ENCODE measurements at regions of chr2 and their contacts with region 1.

Region 1: DNA sequence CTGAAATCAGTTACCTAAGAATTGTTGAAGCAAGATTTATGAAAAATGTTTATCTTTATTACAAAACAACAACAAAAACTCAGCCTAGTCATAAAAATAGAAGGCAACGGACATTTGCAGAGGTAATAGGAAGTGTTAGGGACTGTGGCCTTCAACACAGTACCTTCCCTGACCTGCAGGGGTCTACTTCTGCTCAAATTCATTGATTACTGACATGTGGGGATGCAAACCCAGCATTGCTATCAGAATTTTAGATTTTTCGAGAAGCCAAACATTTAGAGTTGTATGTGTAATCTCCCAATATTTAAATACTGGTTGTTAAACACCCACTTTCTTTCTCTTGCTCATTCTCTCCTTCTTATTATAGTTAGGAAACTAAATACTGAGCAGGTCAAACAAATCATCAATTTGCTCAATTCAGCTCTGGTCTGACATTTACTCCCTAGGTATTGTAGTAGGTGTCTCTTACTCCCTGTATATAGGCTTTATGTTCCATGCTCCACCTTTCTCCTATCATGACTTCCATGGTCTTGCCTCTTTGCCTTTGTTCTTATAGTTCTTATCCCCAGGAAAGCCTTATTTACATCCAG is 198.5 kb downstream of the UBE2E3 start:
- DNase-seq: peak; percentile 50
- ATAC-seq: peak; percentile 80
- H3K4me3 Mint-ChIP-seq: no peak overlapping the region
- H3K27ac Mint-ChIP-seq: peak overlapping the region; percentile 41
- H3K4me1 Mint-ChIP-seq: peaks cover 51% of the 10 kb centered on the region
- H3K27me3 Mint-ChIP-seq: no peaks in the 10 kb centered on the region

Region 2: GRCh38 chr2:181165199-181165868 is 13.6 kb before region 1 on chr2:
- CTCF ChIA-PET with region 1: interaction called, 11 read pairs
- POLR2A ChIA-PET with region 1: interaction called, 3 read pairs
- DNase-seq: peak; percentile 55
- ATAC-seq: peak; percentile 86
- H3K4me3 Mint-ChIP-seq: peak overlapping the region; percentile 27
- H3K27ac Mint-ChIP-seq: peak overlapping the region; percentile 93
- H3K4me1 Mint-ChIP-seq: peaks cover 47% of the 10 kb centered on the region
- H3K27me3 Mint-ChIP-seq: no peaks in the 10 kb centered on the region

Region 3: DNA sequence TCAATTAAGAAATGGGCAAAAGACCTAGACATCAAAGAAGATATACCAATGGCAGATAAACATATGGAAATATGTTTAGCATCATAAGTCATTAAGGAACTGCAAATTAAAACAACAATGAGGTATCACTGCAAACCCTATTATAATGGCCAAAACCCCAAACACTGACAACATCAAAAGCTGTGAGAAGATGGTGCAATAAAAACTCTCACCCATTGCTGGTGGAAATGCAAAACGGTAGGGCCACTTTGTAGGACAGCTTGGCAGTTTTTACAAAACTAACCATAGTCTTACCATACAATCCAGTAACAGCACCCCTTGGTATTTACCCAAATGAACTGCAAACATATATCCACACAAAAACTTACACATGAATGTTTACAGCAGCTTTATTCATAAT is 14.6 kb after region 1 on chr2:
- CTCF ChIA-PET with region 1: interaction called, 27 read pairs
- POLR2A ChIA-PET with region 1: no interaction called
- DNase-seq: no peak
- ATAC-seq: no peak
- H3K4me3 Mint-ChIP-seq: no peak overlapping the region
- H3K27ac Mint-ChIP-seq: no peak overlapping the region
- H3K4me1 Mint-ChIP-seq: peaks cover 40% of the 10 kb centered on the region
- H3K27me3 Mint-ChIP-seq: no peaks in the 10 kb centered on the region

Region 4: GRCh38 chr2:181552808-181553207 is 373.9 kb after region 1 on chr2:
- CTCF ChIA-PET with region 1: no interaction called
- POLR2A ChIA-PET with region 1: no interaction called
- DNase-seq: no peak
- ATAC-seq: no peak
- H3K4me3 Mint-ChIP-seq: no peak overlapping the region
- H3K27ac Mint-ChIP-seq: no peak overlapping the region
- H3K4me1 Mint-ChIP-seq: no peaks in the 10 kb centered on the region
- H3K27me3 Mint-ChIP-seq: no peaks in the 10 kb centered on the region

Measured in activated CD8-positive, alpha-beta T cell treated with anti-CD3 and anti-CD28 coated beads, Interleukin-2, amount 10 ng/mL, durations not matched to agents 7 days and 5 days (primary cell).